Gastrocnemius medialis (tissue), 4 donors: ENCODE measurements at regions of chr15 and their contacts with region 1.

Region 1: GRCh38 chr15:87193481-87193880 is 1063.1 kb downstream of the NTRK3 start:
- DNase-seq: no peak
- ATAC-seq: no peak
- H3K4me3 ChIP-seq: no peak overlapping the region
- H3K27ac ChIP-seq: no peak overlapping the region
- H3K4me1 ChIP-seq: no peaks in the 10 kb centered on the region
- H3K27me3 ChIP-seq: no peaks in the 10 kb centered on the region
- CTCF ChIP-seq: no peak
- POLR2A ChIP-seq: no peak

Region 2: GRCh38 chr15:87245592-87245991 is 52.1 kb after region 1 on chr15:
- in situ Hi-C with region 1: loop called in 1 of 4 experiments (anchors 10 kb)
- intact Hi-C with region 1: no loop called
- DNase-seq: no peak
- ATAC-seq: no peak
- H3K4me3 ChIP-seq: no peak overlapping the region
- H3K27ac ChIP-seq: no peak overlapping the region
- H3K4me1 ChIP-seq: no peaks in the 10 kb centered on the region
- H3K27me3 ChIP-seq: no peaks in the 10 kb centered on the region
- CTCF ChIP-seq: no peak
- POLR2A ChIP-seq: no peak